Ascending aorta (tissue), 2 donors: ENCODE measurements at regions of chr2 and their contacts with region 1.

Region 1: DNA sequence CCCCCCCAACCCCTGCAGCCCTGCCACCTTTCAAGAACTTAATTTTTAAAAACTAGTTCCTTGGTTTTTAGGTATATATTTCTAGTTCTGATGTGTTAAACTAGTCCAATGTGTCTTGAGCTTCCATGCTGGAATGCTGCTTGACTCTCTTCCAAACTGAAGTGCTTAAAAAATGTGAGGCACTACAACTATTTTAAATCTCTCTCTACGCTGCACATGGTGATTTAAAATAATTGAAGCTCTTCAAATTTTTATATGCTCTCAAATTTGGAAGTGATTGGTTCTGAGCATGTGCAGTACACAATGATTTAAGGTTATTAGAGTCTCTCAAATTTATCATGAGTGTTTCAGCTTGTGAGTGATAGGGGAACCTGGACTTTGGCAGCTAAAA is 192.6 kb upstream of the ZEB2 start:
- DNase-seq: no peak
- H3K4me3 ChIP-seq: no peak overlapping the region
- H3K27ac ChIP-seq: peak overlapping the region; percentile 43 to 65
- H3K4me1 ChIP-seq: peaks cover 0 to 5% of the 10 kb centered on the region in 2 donors
- H3K27me3 ChIP-seq: no peaks in the 10 kb centered on the region
- CTCF ChIP-seq: no peak

Region 2: DNA sequence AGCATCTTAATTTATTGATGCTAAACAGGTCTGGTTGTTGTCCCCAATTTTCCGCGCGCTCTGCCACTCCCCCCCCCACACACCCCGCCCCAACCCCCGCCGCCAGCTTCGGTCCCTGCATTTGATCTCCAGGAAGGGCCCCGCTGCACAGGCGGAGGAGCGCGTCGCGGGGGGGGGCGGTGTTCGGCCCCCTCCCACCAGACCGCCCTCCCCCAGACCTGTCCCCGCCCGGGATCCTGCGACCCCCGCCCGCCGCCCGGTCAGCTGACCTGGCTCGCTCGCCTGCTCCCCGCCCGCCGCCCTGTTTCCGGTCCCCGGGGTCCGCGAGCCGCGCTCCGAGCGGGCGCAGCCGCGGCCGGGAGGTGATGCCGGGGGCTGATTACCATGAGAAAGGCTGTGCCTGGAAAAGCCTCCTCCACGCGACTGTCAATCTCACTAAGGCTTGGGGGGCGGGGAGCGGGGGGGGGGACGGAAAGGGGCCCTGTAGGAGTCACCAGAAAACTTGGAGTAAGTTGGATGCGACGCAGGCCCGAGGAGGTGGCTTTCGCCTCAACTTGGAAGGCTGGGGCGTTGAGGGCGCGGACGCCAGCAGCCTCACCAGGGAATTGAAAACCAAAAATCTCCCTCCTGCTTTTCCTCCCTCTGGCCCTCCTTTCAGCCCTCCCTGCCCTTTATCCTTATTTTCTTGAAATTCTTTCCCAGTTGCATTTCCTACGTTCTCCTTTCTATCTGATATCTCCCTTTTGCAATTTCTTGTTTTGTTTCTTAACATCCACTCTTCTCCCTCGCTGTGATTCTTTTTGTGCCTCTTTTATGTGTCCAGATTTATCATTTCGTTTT is 188.2 kb before region 1 on chr2:
- intact Hi-C with region 1: loop called (anchors 2 kb)
- DNase-seq: peak in 1 of 2 donors; percentile 80
- H3K4me3 ChIP-seq: peak overlapping the region; percentile 85 to 86
- H3K27ac ChIP-seq: peak overlapping the region; percentile 99 to 100
- H3K4me1 ChIP-seq: peaks cover 0 to 17% of the 10 kb centered on the region in 2 donors
- H3K27me3 ChIP-seq: no peaks in the 10 kb centered on the region
- CTCF ChIP-seq: no peak

Region 3: GRCh38 chr2:144607891-144608521 is 104.5 kb before region 1 on chr2:
- intact Hi-C with region 1: loop called (anchors 10 kb)
- DNase-seq: no peak
- H3K4me3 ChIP-seq: peak overlapping the region in 1 of 2 donors; percentile 25
- H3K27ac ChIP-seq: peak overlapping the region; percentile 51 to 62
- H3K4me1 ChIP-seq: peaks cover 0 to 6% of the 10 kb centered on the region in 2 donors
- H3K27me3 ChIP-seq: no peaks in the 10 kb centered on the region
- CTCF ChIP-seq: no peak